ENCODE measurements at regions of chr17 and their contacts with region 1.

Region 1: GRCh38 chr17:59786536-59787319 is 79.3 kb downstream of the VMP1 start:
- DNase-seq: peak; percentile 92
- ATAC-seq: peak; percentile 89
- H3K4me3 Mint-ChIP-seq: peak overlapping the region; percentile 76
- H3K27ac Mint-ChIP-seq: peak overlapping the region; percentile 97
- H3K4me1 Mint-ChIP-seq: peaks cover 65% of the 10 kb centered on the region
- H3K27me3 Mint-ChIP-seq: no peaks in the 10 kb centered on the region

Region 2: DNA sequence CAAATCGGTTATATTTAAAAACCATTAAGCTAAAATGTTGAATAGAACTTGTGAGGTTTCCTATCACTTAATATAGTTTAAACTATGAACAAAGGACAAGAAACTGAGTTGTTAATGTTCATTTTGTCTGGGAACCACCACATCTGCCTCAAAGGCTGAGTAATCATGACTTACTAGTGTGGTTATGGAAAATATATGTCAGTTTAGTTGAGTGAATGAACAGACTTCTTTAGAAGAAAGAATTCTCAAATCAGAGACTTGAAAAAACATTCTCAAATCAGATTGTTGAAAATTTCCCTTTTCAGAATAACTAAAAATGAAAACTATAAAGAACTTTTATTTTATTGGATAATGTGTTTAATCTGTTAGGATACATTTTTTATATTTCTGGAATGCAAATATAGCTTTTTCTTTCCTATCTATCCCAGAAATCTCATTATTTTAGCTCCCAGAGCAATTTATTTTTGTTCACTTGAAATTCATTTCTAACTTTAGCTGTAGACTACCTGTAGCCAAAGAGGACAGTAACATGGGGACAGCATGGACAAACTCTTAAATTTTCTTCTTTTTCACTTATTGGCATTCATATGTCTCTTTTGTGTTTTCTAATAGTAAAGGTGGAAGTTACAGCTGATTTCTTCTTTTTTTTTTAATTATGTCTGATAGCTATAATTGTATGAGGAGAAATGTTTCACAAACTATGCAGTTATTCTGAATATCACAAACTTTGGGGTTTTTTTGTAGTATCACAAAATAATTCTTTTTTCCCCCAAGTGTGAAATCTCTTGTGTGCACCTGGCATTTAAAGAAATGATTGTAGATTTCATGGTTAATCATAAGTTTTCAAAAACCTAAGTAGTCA is 24.0 kb before region 1 on chr17:
- CTCF ChIA-PET with region 1: interaction called, 6 read pairs
- POLR2A ChIA-PET with region 1: interaction called, 20 read pairs
- DNase-seq: no peak
- ATAC-seq: peak; percentile 73
- H3K4me3 Mint-ChIP-seq: no peak overlapping the region
- H3K27ac Mint-ChIP-seq: peak overlapping the region; percentile 62
- H3K4me1 Mint-ChIP-seq: peaks cover 42% of the 10 kb centered on the region
- H3K27me3 Mint-ChIP-seq: no peaks in the 10 kb centered on the region

Region 3: GRCh38 chr17:59846394-59847165 is 59.9 kb after region 1 on chr17:
- CTCF ChIA-PET with region 1: interaction called, 73 read pairs
- POLR2A ChIA-PET with region 1: interaction called, 406 read pairs
- DNase-seq: no peak
- ATAC-seq: peak; percentile 55
- H3K4me3 Mint-ChIP-seq: no peak overlapping the region
- H3K27ac Mint-ChIP-seq: peak overlapping the region; percentile 44
- H3K4me1 Mint-ChIP-seq: peaks cover 71% of the 10 kb centered on the region
- H3K27me3 Mint-ChIP-seq: no peaks in the 10 kb centered on the region

Measured in activated CD8-positive, alpha-beta T cell treated with anti-CD3 and anti-CD28 coated beads, Interleukin-2, amount 10 ng/mL, durations not matched to agents 7 days and 5 days (primary cell).